ENCODE measurements at regions of chr14 and their contacts with region 1.

Region 1: DNA sequence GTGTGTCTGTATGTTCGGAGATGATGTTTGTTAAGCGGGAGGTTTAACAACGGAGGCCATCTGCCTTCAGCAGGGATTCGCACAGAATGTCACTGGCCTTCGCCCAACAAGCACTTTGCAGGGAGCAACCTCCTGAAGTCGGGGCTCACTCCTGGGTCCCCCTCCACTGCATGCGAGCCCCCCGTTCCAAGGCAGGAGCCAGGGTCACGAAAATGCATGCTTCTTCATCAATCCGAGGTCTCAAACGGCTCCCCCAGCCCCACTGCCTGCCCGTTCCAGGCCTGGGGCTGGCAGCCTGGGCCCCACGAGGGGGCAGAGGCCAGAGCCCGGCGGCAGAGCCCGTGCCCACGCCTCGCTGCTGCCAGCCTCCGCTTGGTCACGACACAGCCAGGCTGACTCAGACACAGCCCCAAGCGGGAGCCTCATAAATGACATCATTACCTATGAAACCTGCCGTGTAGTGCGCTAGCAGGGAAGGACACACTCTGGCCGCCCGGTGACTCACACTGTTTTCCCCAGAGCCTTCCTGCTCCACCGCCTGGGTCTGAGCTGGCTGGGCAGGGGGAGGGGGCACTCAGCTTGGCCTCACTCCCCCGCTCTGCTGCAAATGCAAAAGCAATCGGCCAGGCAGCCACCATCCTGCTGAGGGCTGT is 169.5 kb upstream of the RTL1 start:
- DNase-seq: peak; percentile 99
- H3K4me3 ChIP-seq: no peak overlapping the region
- H3K27ac ChIP-seq: peak overlapping the region; percentile 96
- H3K4me1 ChIP-seq: peaks cover 49% of the 10 kb centered on the region
- H3K27me3 ChIP-seq: no peaks in the 10 kb centered on the region
- CTCF ChIP-seq: peak in 1 of 2 donors; percentile 13
- POLR2A ChIP-seq: peak; percentile 22

Region 2: GRCh38 chr14:100692859-100693558 is 380.1 kb before region 1 on chr14:
- CTCF ChIA-PET with region 1: no interaction called
- POLR2A ChIA-PET with region 1: no interaction called
- dilution Hi-C with region 1: no loop called
- intact Hi-C with region 1: loop called (anchors 5 kb)
- DNase-seq: peak; percentile 87
- H3K4me3 ChIP-seq: no peak overlapping the region
- H3K27ac ChIP-seq: peak overlapping the region; percentile 88
- H3K4me1 ChIP-seq: peaks cover 21% of the 10 kb centered on the region
- H3K27me3 ChIP-seq: no peaks in the 10 kb centered on the region
- CTCF ChIP-seq: no peak
- POLR2A ChIP-seq: peak; percentile 68

Region 3: DNA sequence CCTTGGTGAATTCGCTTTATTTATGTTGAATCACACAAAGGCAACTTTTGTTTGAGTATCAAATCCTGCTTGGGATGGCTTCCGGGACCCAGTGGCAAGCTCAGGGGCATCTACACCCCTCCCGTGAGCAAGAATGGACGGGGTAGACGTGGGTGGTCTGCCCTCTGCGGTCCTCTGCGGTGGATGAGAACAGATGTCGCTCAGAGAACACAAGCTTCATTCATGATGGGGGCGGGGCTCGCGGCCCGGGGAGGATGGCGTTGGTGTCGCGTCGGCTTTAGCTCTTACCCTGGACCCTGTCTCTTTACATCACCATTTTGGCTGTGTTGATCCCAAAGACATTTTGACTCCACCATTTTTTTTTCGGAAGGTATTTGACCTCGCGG is 11.0 kb before region 1 on chr14:
- CTCF ChIA-PET with region 1: interaction called, 15 read pairs
- POLR2A ChIA-PET with region 1: no interaction called
- dilution Hi-C with region 1: no loop called
- intact Hi-C with region 1: loop called (anchors 1 kb)
- DNase-seq: no peak
- H3K4me3 ChIP-seq: no peak overlapping the region
- H3K27ac ChIP-seq: peak overlapping the region; percentile 77
- H3K4me1 ChIP-seq: peaks cover 42% of the 10 kb centered on the region
- H3K27me3 ChIP-seq: no peaks in the 10 kb centered on the region
- CTCF ChIP-seq: no peak
- POLR2A ChIP-seq: no peak

Region 4: GRCh38 chr14:101098641-101099040 is 25.6 kb after region 1 on chr14:
- CTCF ChIA-PET with region 1: interaction called, 6 read pairs
- POLR2A ChIA-PET with region 1: no interaction called
- dilution Hi-C with region 1: no loop called
- intact Hi-C with region 1: loop called (anchors 1 kb)
- DNase-seq: peak; percentile 98
- H3K4me3 ChIP-seq: peak overlapping the region in 1 of 3 experiments; percentile 43
- H3K27ac ChIP-seq: peak overlapping the region; percentile 91
- H3K4me1 ChIP-seq: peaks cover 29% of the 10 kb centered on the region
- H3K27me3 ChIP-seq: no peaks in the 10 kb centered on the region
- CTCF ChIP-seq: no peak
- POLR2A ChIP-seq: peak; percentile 88

Region 5: DNA sequence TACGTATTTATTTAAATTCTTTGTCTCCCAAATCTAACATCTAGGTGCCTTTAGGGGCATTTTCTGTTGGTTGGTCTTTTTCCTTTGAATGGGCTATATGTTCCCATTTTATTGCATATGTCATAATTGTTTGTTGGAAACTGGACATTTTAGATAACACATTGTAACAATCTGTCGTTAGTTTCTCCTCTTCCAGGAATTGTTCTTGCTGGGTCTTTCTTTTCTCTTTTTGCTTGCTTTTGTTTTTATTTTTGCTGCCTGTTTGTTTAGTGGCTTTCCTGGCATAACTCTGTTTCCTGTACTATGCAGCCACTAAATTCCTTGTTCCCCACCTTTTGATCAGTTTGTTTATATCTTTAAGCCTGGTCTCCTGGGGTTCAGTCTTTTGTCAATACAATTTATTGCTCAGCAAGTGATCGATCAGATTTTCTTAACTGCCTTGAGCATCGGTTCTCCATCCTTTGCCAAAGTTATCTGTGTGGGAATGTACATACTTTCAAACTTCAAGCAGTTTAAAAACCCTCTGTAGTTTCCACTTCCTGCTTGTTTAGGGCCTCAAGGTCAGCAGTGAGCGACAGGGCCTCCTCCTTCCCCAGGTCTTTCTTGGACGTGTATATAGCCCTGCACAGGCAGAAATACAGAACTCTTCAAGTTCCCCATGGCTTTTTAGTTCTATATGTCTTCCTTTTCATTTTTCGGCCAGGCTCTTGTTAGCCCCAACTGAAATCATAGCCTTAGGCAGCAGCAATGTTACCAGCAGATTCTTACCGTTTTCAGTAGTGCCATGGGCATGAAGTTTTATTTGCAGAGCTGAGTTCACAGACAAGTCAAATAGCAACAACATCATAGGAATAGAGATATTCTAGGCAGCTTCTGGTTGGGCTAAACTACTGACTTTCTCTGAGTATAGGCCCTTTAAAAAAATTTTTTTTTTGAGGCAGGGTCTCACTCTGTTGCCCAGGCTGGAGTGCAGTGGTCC is 75.1 kb after region 1 on chr14:
- CTCF ChIA-PET with region 1: no interaction called
- POLR2A ChIA-PET with region 1: no interaction called
- dilution Hi-C with region 1: no loop called
- intact Hi-C with region 1: loop called (anchors 1 kb)
- DNase-seq: peak; percentile 71
- H3K4me3 ChIP-seq: no peak overlapping the region
- H3K27ac ChIP-seq: peak overlapping the region; percentile 79
- H3K4me1 ChIP-seq: peaks cover 43% of the 10 kb centered on the region
- H3K27me3 ChIP-seq: no peaks in the 10 kb centered on the region
- CTCF ChIP-seq: no peak
- POLR2A ChIP-seq: no peak

Region 6: DNA sequence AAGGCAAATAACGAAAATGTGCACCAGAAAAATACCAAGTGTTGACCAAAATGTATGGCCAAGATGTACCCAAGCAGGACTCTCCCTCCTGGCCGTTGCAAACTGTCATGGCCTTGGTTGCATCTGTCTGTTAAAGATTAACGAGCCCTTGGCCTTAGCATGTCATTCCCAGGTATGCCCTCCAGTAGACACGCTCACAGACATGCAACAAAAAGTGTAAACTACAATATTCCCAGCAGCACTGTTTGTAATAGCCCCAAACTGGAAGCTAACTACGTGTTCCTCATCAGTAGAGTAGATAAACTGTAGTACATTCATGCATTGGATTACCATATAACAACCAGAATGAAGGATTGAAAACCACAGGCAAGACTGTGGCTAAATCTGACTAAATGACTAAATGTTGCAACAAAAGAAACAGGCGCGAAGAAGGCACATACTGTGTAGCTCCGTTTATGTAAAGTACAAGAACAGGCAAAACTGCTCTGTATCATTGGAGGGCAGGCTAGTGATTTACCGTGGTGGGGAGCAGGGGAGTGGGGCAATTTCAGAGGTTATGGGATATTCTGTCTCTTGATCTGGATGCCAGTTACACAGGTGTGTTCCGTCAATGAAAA is 255.4 kb after region 1 on chr14:
- CTCF ChIA-PET with region 1: no interaction called
- POLR2A ChIA-PET with region 1: no interaction called
- dilution Hi-C with region 1: no loop called
- intact Hi-C with region 1: no loop called
- DNase-seq: no peak
- H3K4me3 ChIP-seq: no peak overlapping the region
- H3K27ac ChIP-seq: no peak overlapping the region
- H3K4me1 ChIP-seq: no peaks in the 10 kb centered on the region
- H3K27me3 ChIP-seq: no peaks in the 10 kb centered on the region
- CTCF ChIP-seq: no peak
- POLR2A ChIP-seq: no peak

Region 7: GRCh38 chr14:101340556-101340955 is 267.5 kb after region 1 on chr14:
- CTCF ChIA-PET with region 1: no interaction called
- POLR2A ChIA-PET with region 1: no interaction called
- dilution Hi-C with region 1: no loop called
- intact Hi-C with region 1: no loop called
- DNase-seq: no peak
- H3K4me3 ChIP-seq: no peak overlapping the region
- H3K27ac ChIP-seq: no peak overlapping the region
- H3K4me1 ChIP-seq: no peaks in the 10 kb centered on the region
- H3K27me3 ChIP-seq: peaks cover 0 to 2% of the 10 kb centered on the region in 2 experiments
- CTCF ChIP-seq: no peak
- POLR2A ChIP-seq: no peak